ENCODE measurements at regions of chr19 and their contacts with region 1.

Region 1: GRCh38 chr19:21358768-21359451 is at the start of gene ZNF738:
- DNase-seq: peak; percentile 92
- H3K4me3 Mint-ChIP-seq: peak within 1 kb of the TSS; percentile 81
- H3K27ac Mint-ChIP-seq: peak within 1 kb of the TSS; percentile 61
- H3K4me1 Mint-ChIP-seq: no peaks in the 10 kb centered on the region
- H3K27me3 Mint-ChIP-seq: no peaks in the 10 kb centered on the region
- CTCF ChIP-seq: no peak
- total RNA-seq, gene ZNF738: 3.4 and 4.3 TPM in 2 replicates

Region 2: GRCh38 chr19:20863176-20863575 is 495.7 kb before region 1 on chr19:
- CTCF ChIA-PET with region 1: no interaction called
- POLR2A ChIA-PET with region 1: no interaction called
- intact Hi-C with region 1: no loop called
- DNase-seq: no peak
- H3K4me3 Mint-ChIP-seq: no peak overlapping the region
- H3K27ac Mint-ChIP-seq: no peak overlapping the region
- H3K4me1 Mint-ChIP-seq: no peaks in the 10 kb centered on the region
- H3K27me3 Mint-ChIP-seq: no peaks in the 10 kb centered on the region
- CTCF ChIP-seq: no peak

Region 3: GRCh38 chr19:21328885-21329605 is 29.9 kb before region 1 on chr19 and contains the start of gene ZNF708:
- CTCF ChIA-PET with region 1: interaction called, 6 read pairs
- POLR2A ChIA-PET with region 1: interaction called, 30 read pairs
- intact Hi-C with region 1: loop called (anchors 2 kb)
- DNase-seq: peak; percentile 94
- H3K4me3 Mint-ChIP-seq: peak within 1 kb of the TSS; percentile 98
- H3K27ac Mint-ChIP-seq: peak within 1 kb of the TSS; percentile 99
- H3K4me1 Mint-ChIP-seq: peaks cover 5% of the 10 kb centered on the region
- H3K27me3 Mint-ChIP-seq: no peaks in the 10 kb centered on the region
- CTCF ChIP-seq: no peak
- total RNA-seq, gene ZNF708: 5.3 and 7.8 TPM in 2 replicates

Region 4: DNA sequence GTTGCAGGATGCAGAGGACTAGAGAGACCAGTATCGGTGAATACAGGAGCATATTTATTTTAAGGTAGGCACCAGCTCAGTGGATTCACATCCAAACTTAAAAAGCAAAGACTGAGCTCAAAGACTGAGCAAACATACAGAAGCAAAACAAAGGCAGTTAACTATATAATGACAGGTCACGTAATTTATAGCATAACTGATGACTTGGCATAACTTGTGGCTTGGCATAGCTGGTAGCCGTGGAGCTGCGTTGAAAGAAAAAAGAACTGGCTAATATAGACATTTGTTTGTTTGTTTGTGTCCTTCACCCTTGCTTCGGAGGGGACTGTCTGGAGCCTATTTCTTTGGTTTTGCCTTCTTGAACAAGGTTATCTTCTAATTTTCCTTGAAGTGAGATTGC is 71.8 kb after region 1 on chr19:
- CTCF ChIA-PET with region 1: no interaction called
- POLR2A ChIA-PET with region 1: no interaction called
- intact Hi-C with region 1: no loop called
- DNase-seq: no peak
- H3K4me3 Mint-ChIP-seq: no peak overlapping the region
- H3K27ac Mint-ChIP-seq: no peak overlapping the region
- H3K4me1 Mint-ChIP-seq: no peaks in the 10 kb centered on the region
- H3K27me3 Mint-ChIP-seq: no peaks in the 10 kb centered on the region
- CTCF ChIP-seq: no peak